CD4-positive, alpha-beta memory T cell (primary cell): ENCODE measurements at regions of chr5 and their contacts with region 1.

Region 1: DNA sequence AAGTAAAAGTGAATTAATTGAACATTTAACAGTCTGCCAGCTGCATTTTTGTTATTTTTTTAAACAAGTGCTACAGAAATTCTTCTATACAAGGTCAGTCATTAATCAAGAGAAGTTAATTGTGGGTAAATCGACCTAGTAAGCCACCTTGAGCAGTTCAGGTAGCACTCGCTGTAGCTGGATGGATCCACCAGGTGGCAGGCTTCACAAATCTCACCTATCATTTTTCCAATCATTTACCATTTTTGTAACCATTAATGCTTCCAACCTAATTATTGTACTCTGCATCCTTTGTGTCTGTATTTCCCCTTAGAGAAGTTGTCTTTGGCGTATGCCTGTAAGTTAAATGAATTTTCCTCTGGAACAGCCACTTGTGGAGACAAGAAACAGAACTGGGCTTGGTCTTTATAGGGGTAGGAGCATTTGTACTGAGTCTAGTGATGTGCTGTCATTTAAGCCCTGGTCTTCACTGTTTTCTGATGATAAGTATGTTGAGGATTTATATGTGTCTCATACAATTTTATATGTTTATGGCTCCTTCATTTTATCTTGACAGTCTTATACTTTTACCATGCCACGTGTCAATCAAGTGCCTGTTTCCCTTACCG is 39.5 kb downstream of the CD180 start:
- DNase-seq: peak; percentile 58 to 64 (median 61)
- H3K4me3 ChIP-seq: no peak overlapping the region
- H3K4me3 Mint-ChIP-seq: peak overlapping the region in 4 of 8 donors; percentile 8 to 55 (median 45)
- H3K27ac ChIP-seq: no peak overlapping the region
- H3K27ac Mint-ChIP-seq: peak overlapping the region; percentile 47 to 88 (median 83)
- H3K4me1 ChIP-seq: peaks cover 55% of the 10 kb centered on the region
- H3K4me1 Mint-ChIP-seq: peaks cover 43 to 58% (median 51%) of the 10 kb centered on the region in 4 donors
- H3K27me3 ChIP-seq: no peaks in the 10 kb centered on the region
- H3K27me3 Mint-ChIP-seq: no peaks in the 10 kb centered on the region

Region 2: DNA sequence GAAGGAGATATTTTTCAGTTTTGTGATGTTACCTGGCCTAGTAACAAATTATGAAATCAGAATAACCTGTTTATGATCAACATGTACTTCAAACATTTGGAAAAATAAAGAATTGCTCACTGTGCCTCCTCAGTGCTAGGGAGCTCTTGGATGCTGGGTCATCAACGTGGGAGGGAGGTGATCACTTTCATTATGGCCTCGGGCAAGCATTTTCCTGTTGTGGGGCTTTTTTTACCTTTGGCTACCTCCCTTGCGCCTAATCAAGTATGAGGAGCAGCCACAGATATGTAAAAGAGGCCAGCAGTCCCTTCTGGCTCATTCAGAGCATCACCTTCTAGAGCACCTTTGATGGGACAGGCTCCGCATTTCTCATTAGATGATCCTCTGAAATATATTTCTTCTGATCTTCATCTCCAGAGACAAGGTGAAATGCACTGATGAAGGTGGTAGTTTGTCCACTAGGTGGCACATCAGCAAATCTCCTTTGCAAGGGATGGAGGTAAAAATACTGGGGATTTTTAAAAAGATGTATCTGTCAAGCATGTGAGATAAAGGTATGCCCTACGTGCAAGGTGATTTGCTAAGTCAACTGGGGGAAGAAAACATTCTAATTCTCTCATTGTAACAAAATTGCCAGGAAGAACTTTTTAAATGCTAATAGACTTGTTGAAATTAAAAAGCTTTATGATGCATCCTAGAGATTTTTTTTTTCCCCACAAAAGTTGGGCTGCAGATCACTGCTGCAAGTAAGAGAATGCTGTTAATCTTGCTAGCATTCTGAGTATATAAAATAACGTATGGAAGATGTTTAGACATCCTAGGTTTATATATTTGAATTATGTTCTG is 342.7 kb before region 1 on chr5:
- CTCF ChIA-PET with region 1: interaction called, 3 read pairs
- POLR2A ChIA-PET with region 1: no interaction called
- intact Hi-C with region 1: loop called (anchors 2 kb)
- DNase-seq: peak in 4 of 5 donors; percentile 42 to 51 (median 47)
- H3K4me3 ChIP-seq: no peak overlapping the region
- H3K4me3 Mint-ChIP-seq: peak overlapping the region in 2 of 8 donors; percentile 22 to 27
- H3K27ac ChIP-seq: no peak overlapping the region
- H3K27ac Mint-ChIP-seq: no peak overlapping the region
- H3K4me1 ChIP-seq: no peaks in the 10 kb centered on the region
- H3K4me1 Mint-ChIP-seq: peaks cover 0 to 9% (median 2%) of the 10 kb centered on the region in 4 donors
- H3K27me3 ChIP-seq: no peaks in the 10 kb centered on the region
- H3K27me3 Mint-ChIP-seq: peaks cover 5 to 8% of the 10 kb centered on the region in 2 donors

Region 3: GRCh38 chr5:67003935-67004729 is 152.9 kb before region 1 on chr5:
- CTCF ChIA-PET with region 1: interaction called, 3 read pairs
- POLR2A ChIA-PET with region 1: interaction called, 16 read pairs
- intact Hi-C with region 1: no loop called
- DNase-seq: peak; percentile 88 to 96 (median 90)
- H3K4me3 ChIP-seq: peak overlapping the region; percentile 81 to 83
- H3K4me3 Mint-ChIP-seq: peak overlapping the region; percentile 89 to 99 (median 98)
- H3K27ac ChIP-seq: peak overlapping the region; percentile 82
- H3K27ac Mint-ChIP-seq: peak overlapping the region; percentile 95 to 99 (median 98)
- H3K4me1 ChIP-seq: peaks cover 55% of the 10 kb centered on the region
- H3K4me1 Mint-ChIP-seq: peaks cover 40 to 58% (median 50%) of the 10 kb centered on the region in 4 donors
- H3K27me3 ChIP-seq: no peaks in the 10 kb centered on the region
- H3K27me3 Mint-ChIP-seq: no peaks in the 10 kb centered on the region

Region 4: DNA sequence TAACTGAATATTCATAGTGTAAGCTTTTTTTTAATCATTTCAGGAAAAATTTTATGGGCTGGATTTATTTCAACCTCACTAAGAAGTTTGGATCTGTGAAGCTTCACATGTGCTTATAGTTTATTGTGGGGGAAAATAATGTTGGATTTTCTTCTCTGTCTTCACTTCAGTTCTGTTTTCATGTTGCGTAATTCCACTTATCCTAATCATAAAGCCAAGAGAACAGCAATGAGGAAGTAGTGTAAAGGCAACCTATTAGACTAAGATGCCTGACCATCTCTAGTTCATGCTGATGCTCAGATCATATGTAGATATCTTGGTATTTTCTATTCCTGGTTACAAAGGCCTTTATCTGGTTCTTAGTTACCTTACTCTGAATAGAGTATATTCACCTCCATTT is 10.5 kb before region 1 on chr5:
- CTCF ChIA-PET with region 1: interaction called, 15 read pairs
- POLR2A ChIA-PET with region 1: no interaction called
- intact Hi-C with region 1: no loop called
- DNase-seq: no peak
- H3K4me3 ChIP-seq: no peak overlapping the region
- H3K4me3 Mint-ChIP-seq: no peak overlapping the region
- H3K27ac ChIP-seq: no peak overlapping the region
- H3K27ac Mint-ChIP-seq: no peak overlapping the region
- H3K4me1 ChIP-seq: no peaks in the 10 kb centered on the region
- H3K4me1 Mint-ChIP-seq: peaks cover 0 to 2% (median 0%) of the 10 kb centered on the region in 4 donors
- H3K27me3 ChIP-seq: no peaks in the 10 kb centered on the region
- H3K27me3 Mint-ChIP-seq: no peaks in the 10 kb centered on the region

Region 5: GRCh38 chr5:67215583-67216471 is 58.7 kb after region 1 on chr5:
- CTCF ChIA-PET with region 1: interaction called, 851 read pairs
- POLR2A ChIA-PET with region 1: interaction called, 703 read pairs
- intact Hi-C with region 1: no loop called
- DNase-seq: peak; percentile 72 to 82 (median 80)
- H3K4me3 ChIP-seq: peak overlapping the region; percentile 10 to 44
- H3K4me3 Mint-ChIP-seq: peak overlapping the region; percentile 52 to 91 (median 82)
- H3K27ac ChIP-seq: peak overlapping the region; percentile 52
- H3K27ac Mint-ChIP-seq: peak overlapping the region; percentile 94 to 99 (median 98)
- H3K4me1 ChIP-seq: peaks cover 65% of the 10 kb centered on the region
- H3K4me1 Mint-ChIP-seq: peaks cover 57 to 69% (median 60%) of the 10 kb centered on the region in 4 donors
- H3K27me3 ChIP-seq: no peaks in the 10 kb centered on the region
- H3K27me3 Mint-ChIP-seq: no peaks in the 10 kb centered on the region